Esophagus muscularis mucosa (tissue), 4 donors: ENCODE measurements at regions of chr3 and their contacts with region 1.

Region 1: GRCh38 chr3:29280404-29281093 is at the start of gene RBMS3:
- DNase-seq: peak; percentile 95
- H3K4me3 ChIP-seq: peak within 1 kb of the TSS; percentile 63 to 74 (median 66)
- H3K27ac ChIP-seq: peak within 1 kb of the TSS; percentile 77 to 90 (median 88)
- H3K4me1 ChIP-seq: peaks cover 3 to 37% (median 30%) of the 10 kb centered on the region in 4 donors
- H3K27me3 ChIP-seq: no peaks in the 10 kb centered on the region
- CTCF ChIP-seq: peak; percentile 34 to 72 (median 42)
- EP300 ChIP-seq: no peak
- POLR2A ChIP-seq: no peak
- total RNA-seq, gene RBMS3: 53.0 to 81.5 (median 61.2) TPM

Region 2: GRCh38 chr3:29144807-29145206 is 135.7 kb before region 1 on chr3:
- intact Hi-C with region 1: loop called (anchors 10 kb)
- DNase-seq: no peak
- H3K4me3 ChIP-seq: no peak overlapping the region
- H3K27ac ChIP-seq: no peak overlapping the region
- H3K4me1 ChIP-seq: peaks cover 5 to 31% (median 28%) of the 10 kb centered on the region in 4 donors
- H3K27me3 ChIP-seq: no peaks in the 10 kb centered on the region
- CTCF ChIP-seq: peak in 2 of 3 experiments; percentile 21 to 32
- EP300 ChIP-seq: no peak
- POLR2A ChIP-seq: no peak

Region 3: GRCh38 chr3:29430558-29430971 is 150.0 kb after region 1 on chr3:
- intact Hi-C with region 1: loop called (anchors 10 kb)
- DNase-seq: no peak
- H3K4me3 ChIP-seq: no peak overlapping the region
- H3K27ac ChIP-seq: no peak overlapping the region
- H3K4me1 ChIP-seq: peaks cover 30 to 63% (median 55%) of the 10 kb centered on the region in 4 donors
- H3K27me3 ChIP-seq: no peaks in the 10 kb centered on the region
- CTCF ChIP-seq: no peak
- EP300 ChIP-seq: no peak
- POLR2A ChIP-seq: no peak

Region 4: DNA sequence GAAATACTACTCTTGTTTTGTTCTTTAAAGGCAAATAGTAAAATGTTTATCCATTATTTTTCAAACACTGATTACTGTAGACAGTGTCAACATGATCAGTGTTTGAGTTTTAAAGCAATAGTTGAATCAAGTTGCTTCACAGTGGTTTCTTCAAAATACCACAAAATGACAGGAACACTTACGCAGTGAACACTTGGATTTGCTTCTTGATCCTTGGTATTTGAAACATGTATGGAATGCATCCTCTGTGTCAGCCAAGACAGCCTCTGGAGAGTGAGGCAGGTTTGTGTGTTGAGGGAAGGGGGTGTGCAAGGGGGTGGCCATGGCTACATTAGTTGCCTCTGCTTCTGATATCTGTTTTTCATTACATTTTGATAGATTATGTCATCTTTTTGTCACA is 413.3 kb after region 1 on chr3:
- intact Hi-C with region 1: loop called (anchors 5 kb)
- DNase-seq: no peak
- H3K4me3 ChIP-seq: no peak overlapping the region
- H3K27ac ChIP-seq: peak overlapping the region; percentile 79 to 86 (median 80)
- H3K4me1 ChIP-seq: peaks cover 27 to 70% (median 63%) of the 10 kb centered on the region in 4 donors
- H3K27me3 ChIP-seq: no peaks in the 10 kb centered on the region
- CTCF ChIP-seq: no peak
- EP300 ChIP-seq: no peak
- POLR2A ChIP-seq: no peak